ENCODE measurements at regions of chr19 and their contacts with region 1.

Region 1: GRCh38 chr19:43532962-43533545 is at the start of gene ZNF575:
- DNase-seq: peak; percentile 91
- ATAC-seq: peak; percentile 88
- H3K4me3 ChIP-seq: peak within 1 kb of the TSS; percentile 74
- H3K27ac ChIP-seq: peak within 1 kb of the TSS; percentile 37
- H3K4me1 ChIP-seq: peaks cover 8% of the 10 kb centered on the region; the same call in 1 of the 2 replicates
- H3K27me3 ChIP-seq: no peaks in the 10 kb centered on the region
- CTCF ChIP-seq: no peak
- EP300 ChIP-seq: no peak
- POLR2A ChIP-seq: peak; percentile 68
- RAD21 ChIP-seq: no peak
- polyA plus RNA-seq, gene ZNF575: 0.23 to 0.35 TPM

Region 2: DNA sequence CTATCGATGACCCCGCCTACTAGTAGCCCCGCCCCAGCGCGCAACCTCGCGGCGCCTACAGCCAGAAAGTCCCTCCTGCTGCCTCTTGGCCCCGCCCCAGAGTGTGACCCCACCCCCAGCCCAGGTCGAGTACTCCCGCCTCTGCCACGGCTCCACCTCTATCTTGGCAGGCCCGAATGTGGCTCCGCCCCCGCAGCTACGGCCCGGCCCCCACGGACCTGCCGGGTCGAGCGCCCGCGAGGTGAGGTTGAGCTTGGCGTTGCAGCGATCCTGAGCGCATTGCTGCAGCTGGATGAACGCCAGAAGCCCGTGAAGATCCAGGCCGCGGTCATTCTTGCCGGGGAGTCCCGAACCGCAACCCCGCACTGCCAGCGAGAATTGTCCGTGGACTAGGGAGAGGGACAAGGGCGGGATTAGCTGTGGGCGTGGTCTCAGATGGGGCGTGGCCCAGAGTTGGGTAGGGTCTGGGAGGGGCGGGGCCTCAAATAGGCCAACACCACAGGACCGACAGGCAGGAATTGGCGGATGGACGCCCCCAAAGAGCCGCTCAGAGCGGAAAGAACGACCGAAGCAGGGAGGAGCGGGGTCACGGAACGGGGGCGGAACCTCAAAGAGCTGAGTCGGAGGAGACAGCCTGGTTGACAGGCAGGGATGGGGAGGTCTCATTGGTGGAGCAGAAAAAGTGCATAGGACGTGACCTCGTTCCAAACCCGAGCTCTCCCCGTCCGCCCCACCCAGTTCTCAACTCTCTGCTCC is 69.5 kb before region 1 on chr19:
- CTCF ChIA-PET with region 1: no interaction called
- POLR2A ChIA-PET with region 1: interaction called, 14 read pairs
- RAD21 ChIA-PET with region 1: interaction called, 6 read pairs
- SMC1A ChIA-PET with region 1: no interaction called
- in situ Hi-C with region 1: no loop called
- intact Hi-C with region 1: no loop called
- DNase-seq: peak; percentile 73
- ATAC-seq: peak; percentile 97
- H3K4me3 ChIP-seq: peak overlapping the region; percentile 77
- H3K27ac ChIP-seq: no peak overlapping the region
- H3K4me1 ChIP-seq: peaks cover 8% of the 10 kb centered on the region; the same call in 1 of the 2 replicates
- H3K27me3 ChIP-seq: no peaks in the 10 kb centered on the region
- CTCF ChIP-seq: no peak
- EP300 ChIP-seq: no peak
- POLR2A ChIP-seq: no peak
- RAD21 ChIP-seq: no peak

Region 3: DNA sequence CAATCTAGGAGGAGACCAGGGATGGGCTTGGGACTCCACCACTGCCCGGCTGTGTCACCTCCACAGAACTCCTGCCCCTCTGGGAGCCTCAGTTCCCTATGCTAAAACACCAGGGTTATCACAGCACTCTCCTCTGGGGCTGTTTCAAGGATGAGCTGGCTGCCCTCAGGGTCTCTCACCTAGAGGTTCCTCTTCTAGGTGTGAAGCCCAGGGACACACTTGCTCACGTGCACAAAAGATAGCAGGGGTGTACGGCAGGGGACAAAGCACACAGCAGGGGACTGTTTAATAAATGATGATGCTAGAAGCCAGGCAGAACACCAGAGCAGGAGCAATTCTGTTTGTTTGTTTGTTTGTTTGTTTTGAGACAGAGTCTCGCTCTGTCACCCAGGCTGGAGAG is 50.9 kb before region 1 on chr19:
- CTCF ChIA-PET with region 1: no interaction called
- POLR2A ChIA-PET with region 1: no interaction called
- RAD21 ChIA-PET with region 1: no interaction called
- SMC1A ChIA-PET with region 1: no interaction called
- in situ Hi-C with region 1: no loop called
- intact Hi-C with region 1: no loop called
- DNase-seq: no peak
- ATAC-seq: no peak
- H3K4me3 ChIP-seq: no peak overlapping the region
- H3K27ac ChIP-seq: no peak overlapping the region
- H3K4me1 ChIP-seq: no peaks in the 10 kb centered on the region
- H3K27me3 ChIP-seq: no peaks in the 10 kb centered on the region
- CTCF ChIP-seq: no peak
- EP300 ChIP-seq: no peak
- POLR2A ChIP-seq: no peak
- RAD21 ChIP-seq: no peak

Region 4: DNA sequence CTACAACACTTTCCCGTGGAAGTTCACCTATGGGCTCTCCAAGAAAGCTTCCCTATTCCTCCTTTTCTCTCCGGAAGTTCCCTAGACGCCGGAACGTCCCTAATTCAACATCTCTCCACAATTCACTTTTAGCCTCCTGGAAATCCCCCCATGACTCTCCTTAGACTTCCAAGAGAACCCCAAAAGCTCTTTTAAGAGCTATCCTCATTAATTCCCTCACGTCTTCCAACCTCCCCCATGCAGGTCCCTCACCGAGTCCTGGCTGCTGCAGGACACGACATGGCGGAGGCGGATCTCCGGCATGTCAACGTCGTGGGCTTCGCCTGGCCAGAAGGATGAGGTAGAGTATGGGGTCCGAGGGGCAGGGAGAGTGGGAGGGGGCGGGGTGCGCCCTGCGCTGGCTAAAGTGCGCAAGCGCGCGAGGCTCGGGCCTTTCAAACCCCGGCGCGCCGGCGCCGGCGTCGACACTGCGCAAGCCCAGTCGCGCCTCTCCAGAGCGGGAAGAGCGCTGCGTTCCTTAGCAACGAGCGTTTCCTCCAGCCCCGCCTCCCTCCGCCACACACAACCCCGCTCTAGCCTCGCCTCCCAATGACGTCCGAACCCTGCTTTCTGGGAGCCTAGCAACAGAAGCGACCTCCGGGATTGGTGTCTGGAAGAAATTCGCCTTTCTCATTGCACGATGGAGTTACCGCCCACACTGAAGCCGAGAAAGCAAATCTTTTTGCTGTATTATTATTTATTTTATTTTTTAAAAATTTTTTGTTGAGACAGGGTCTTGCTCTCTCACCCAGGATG is 42.3 kb after region 1 on chr19 and contains the starts of genes PINLYP and XRCC1:
- CTCF ChIA-PET with region 1: interaction called, 4 read pairs
- POLR2A ChIA-PET with region 1: interaction called, 16 read pairs
- RAD21 ChIA-PET with region 1: interaction called, 6 read pairs
- SMC1A ChIA-PET with region 1: interaction called, 7 read pairs
- in situ Hi-C with region 1: no loop called
- intact Hi-C with region 1: no loop called
- DNase-seq: peak; percentile 93
- ATAC-seq: peak; percentile 99
- H3K4me3 ChIP-seq: peak within 1 kb of the TSS; percentile 95
- H3K27ac ChIP-seq: peak within 1 kb of the TSS; percentile 78
- H3K4me1 ChIP-seq: peaks cover 5% of the 10 kb centered on the region
- H3K27me3 ChIP-seq: no peaks in the 10 kb centered on the region
- CTCF ChIP-seq: no peak
- EP300 ChIP-seq: no peak
- POLR2A ChIP-seq: peak; percentile 72
- RAD21 ChIP-seq: no peak
- polyA plus RNA-seq, gene PINLYP: 23.0 to 26.9 TPM
- polyA plus RNA-seq, gene XRCC1: 2.0 to 7.5 TPM

Region 5: DNA sequence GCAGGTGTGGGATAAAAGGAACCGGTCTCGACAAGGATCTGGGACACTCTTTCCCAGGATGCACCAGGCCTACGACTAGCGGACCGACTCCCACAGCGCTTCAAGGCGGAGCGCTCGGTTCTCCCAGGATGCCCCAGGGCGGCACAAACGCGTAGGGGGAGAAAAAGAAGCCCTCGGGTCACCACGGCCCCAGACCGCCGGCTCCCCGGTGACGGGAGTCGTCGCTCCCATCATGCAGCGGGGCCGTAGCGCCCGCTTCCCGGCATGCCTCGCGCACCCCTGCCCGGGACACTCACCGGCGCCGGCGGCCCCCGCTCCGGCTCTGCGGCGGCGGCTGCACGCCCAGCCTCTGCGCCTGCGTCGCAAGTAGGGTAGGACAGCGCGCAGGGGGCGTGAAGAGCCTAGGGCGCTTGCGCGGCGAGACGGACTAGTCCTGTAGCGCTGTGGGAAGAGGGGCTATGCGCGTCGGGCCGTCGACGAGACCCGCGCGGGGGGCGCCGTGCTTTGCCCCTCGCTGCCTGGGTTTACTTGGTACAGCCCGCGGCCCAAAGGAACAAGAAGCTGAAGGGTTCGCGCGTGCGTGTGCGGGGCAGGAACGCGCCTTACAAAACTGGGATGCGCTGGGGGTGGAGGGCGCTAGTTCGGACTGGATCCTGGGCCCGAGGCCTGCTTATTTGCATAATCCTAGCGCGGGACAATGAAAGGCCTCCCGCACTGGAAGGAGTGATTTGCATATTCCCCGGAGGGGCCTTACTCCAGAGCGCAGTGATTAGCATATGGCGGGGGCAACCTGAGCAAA is 86.4 kb after region 1 on chr19 and contains the start of gene ZNF428:
- CTCF ChIA-PET with region 1: no interaction called
- POLR2A ChIA-PET with region 1: no interaction called
- RAD21 ChIA-PET with region 1: no interaction called
- SMC1A ChIA-PET with region 1: no interaction called
- in situ Hi-C with region 1: no loop called
- intact Hi-C with region 1: no loop called
- DNase-seq: peak; percentile 67
- ATAC-seq: peak; percentile 95
- H3K4me3 ChIP-seq: peak within 1 kb of the TSS; percentile 82
- H3K27ac ChIP-seq: peak within 1 kb of the TSS; percentile 77
- H3K4me1 ChIP-seq: peaks cover 6% of the 10 kb centered on the region; the same call in 1 of the 2 replicates
- H3K27me3 ChIP-seq: no peaks in the 10 kb centered on the region
- CTCF ChIP-seq: no peak
- EP300 ChIP-seq: no peak
- POLR2A ChIP-seq: peak; percentile 87
- RAD21 ChIP-seq: no peak
- polyA plus RNA-seq, gene ZNF428: 0.27 to 0.38 TPM

Measured in GM12878 (cell line).